ENCODE measurements at regions of chr10 and their contacts with region 1.

Region 1: GRCh38 chr10:95610727-95611126 is 45.8 kb downstream of the ALDH18A1 start:
- DNase-seq: no peak
- ATAC-seq: no peak
- H3K4me3 ChIP-seq: no peak overlapping the region
- H3K4me3 Mint-ChIP-seq: no peak overlapping the region
- H3K27ac ChIP-seq: no peak overlapping the region
- H3K27ac Mint-ChIP-seq: no peak overlapping the region
- H3K4me1 ChIP-seq: no peaks in the 10 kb centered on the region
- H3K4me1 Mint-ChIP-seq: no peaks in the 10 kb centered on the region
- H3K27me3 ChIP-seq: no peaks in the 10 kb centered on the region
- H3K27me3 Mint-ChIP-seq: no peaks in the 10 kb centered on the region

Region 2: GRCh38 chr10:95236068-95236903 is 374.4 kb before region 1 on chr10:
- CTCF ChIA-PET with region 1: no interaction called
- POLR2A ChIA-PET with region 1: no interaction called
- DNase-seq: no peak
- ATAC-seq: peak in 1 of 4 experiments; percentile 30
- H3K4me3 ChIP-seq: no peak overlapping the region
- H3K4me3 Mint-ChIP-seq: no peak overlapping the region
- H3K27ac ChIP-seq: no peak overlapping the region
- H3K27ac Mint-ChIP-seq: peak overlapping the region in 1 of 2 donors; percentile 12
- H3K4me1 ChIP-seq: peaks cover 0 to under 1% of the 10 kb centered on the region in 2 experiments
- H3K4me1 Mint-ChIP-seq: peaks cover under 1 to 6% (median 4%) of the 10 kb centered on the region in 3 donors
- H3K27me3 ChIP-seq: peaks cover 0 to 3% of the 10 kb centered on the region in 2 experiments
- H3K27me3 Mint-ChIP-seq: peaks cover 0 to 9% of the 10 kb centered on the region in 2 donors

Region 3: GRCh38 chr10:95588025-95588424 is 22.7 kb before region 1 on chr10:
- CTCF ChIA-PET with region 1: interaction called in 1 of 2 experiments, 12 read pairs
- POLR2A ChIA-PET with region 1: no interaction called
- DNase-seq: no peak
- ATAC-seq: no peak
- H3K4me3 ChIP-seq: no peak overlapping the region
- H3K4me3 Mint-ChIP-seq: no peak overlapping the region
- H3K27ac ChIP-seq: no peak overlapping the region
- H3K27ac Mint-ChIP-seq: no peak overlapping the region
- H3K4me1 ChIP-seq: no peaks in the 10 kb centered on the region
- H3K4me1 Mint-ChIP-seq: no peaks in the 10 kb centered on the region
- H3K27me3 ChIP-seq: peaks cover 0 to 6% of the 10 kb centered on the region in 2 experiments
- H3K27me3 Mint-ChIP-seq: peaks cover 9 to 10% of the 10 kb centered on the region in 2 donors

Measured in T-cell (primary cell).